ENCODE measurements at regions of chr1 and their contacts with region 1.

Region 1: GRCh38 chr1:99645699-99646531 is at the start of gene PALMD:
- DNase-seq: peak; percentile 61
- ATAC-seq: peak; percentile 89
- H3K4me3 ChIP-seq: peak within 1 kb of the TSS; percentile 74 to 86 (median 80)
- H3K27ac ChIP-seq: peak within 1 kb of the TSS; percentile 87
- H3K4me1 ChIP-seq: peaks cover 56% of the 10 kb centered on the region
- H3K27me3 ChIP-seq: no peaks in the 10 kb centered on the region; a peak in 1 of 5 replicates
- CTCF ChIP-seq: no peak
- EP300 ChIP-seq: no peak
- POLR2A ChIP-seq: peak; percentile 53 to 56; a peak in 2 of 4 replicates
- RAD21 ChIP-seq: no peak
- total RNA-seq, gene PALMD: 31.1 and 42.0 TPM in 2 replicates

Region 2: DNA sequence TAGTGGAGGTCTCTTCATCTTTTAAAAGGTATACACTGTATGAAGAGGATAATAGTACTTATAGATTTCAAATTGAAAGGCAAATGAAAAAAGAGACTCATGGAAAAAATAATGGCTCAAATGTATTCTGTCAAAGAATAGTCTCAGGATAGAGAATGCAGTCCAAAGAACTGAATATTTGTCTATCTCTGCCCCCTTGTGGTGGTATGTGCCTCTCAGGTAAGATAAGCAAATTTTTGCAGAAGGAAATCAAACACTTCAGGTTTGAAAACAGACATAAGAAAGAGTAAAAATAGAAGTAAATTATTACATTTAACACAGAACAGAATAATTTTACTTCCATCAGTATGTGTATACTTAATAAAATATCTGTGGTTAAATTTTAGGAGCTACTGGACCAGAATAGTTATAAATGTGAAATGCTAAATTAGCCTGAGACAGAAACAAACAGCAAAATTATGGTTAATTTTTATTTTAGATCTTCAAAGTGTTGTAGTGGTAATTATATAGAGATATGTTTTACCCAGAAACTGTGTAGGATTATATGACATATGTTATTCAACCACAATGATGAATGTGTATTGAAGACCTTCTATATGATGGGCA is 164.4 kb before region 1 on chr1:
- CTCF ChIA-PET with region 1: interaction called, 4 read pairs
- POLR2A ChIA-PET with region 1: no interaction called
- in situ Hi-C with region 1: no loop called
- intact Hi-C with region 1: loop called (anchors 2 kb)
- DNase-seq: peak; percentile 60
- ATAC-seq: peak; percentile 77
- H3K4me3 ChIP-seq: no peak overlapping the region
- H3K27ac ChIP-seq: no peak overlapping the region
- H3K4me1 ChIP-seq: no peaks in the 10 kb centered on the region
- H3K27me3 ChIP-seq: no peaks in the 10 kb centered on the region
- CTCF ChIP-seq: peak; percentile 70
- EP300 ChIP-seq: no peak
- POLR2A ChIP-seq: no peak
- RAD21 ChIP-seq: peak; percentile 53; the same call in 1 of the 2 replicates

Region 3: DNA sequence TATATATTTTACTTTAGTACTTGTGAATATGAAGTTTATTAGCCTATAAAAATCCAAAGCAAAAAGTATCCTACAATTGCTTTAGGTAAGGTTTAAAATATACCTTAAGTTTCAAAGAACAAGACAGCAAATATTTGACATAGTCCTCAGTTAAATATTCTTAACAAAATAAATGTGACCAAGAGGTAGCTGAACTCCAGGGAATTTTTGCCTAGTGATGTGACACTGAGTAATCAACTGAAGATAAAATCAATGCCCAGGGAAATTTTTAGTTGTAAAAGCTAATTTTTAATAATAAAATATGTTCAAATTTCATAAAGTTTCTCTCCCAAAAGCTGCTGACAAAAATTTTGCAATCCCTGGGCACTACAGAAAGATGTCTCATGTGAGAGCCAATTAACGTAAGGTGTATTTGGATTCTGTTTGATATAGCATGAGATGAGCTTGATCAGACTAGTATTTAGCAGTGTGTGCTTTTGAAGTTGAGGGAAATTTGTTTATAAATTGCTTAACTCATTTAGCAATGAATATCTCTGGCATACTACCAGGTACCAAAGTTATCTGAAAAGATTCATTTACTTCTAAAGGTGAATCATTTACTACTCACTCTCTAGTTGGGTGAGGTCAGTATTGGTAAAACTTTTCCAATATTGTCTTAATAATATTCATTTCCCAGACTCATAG is 80.2 kb before region 1 on chr1:
- CTCF ChIA-PET with region 1: no interaction called
- POLR2A ChIA-PET with region 1: interaction called, 20 read pairs
- in situ Hi-C with region 1: no loop called
- intact Hi-C with region 1: loop called (anchors 1 kb)
- DNase-seq: peak; percentile 60
- ATAC-seq: peak; percentile 60
- H3K4me3 ChIP-seq: peak overlapping the region in 2 of 3 experiments; percentile 38 to 51; a peak in 3 of 6 replicates
- H3K27ac ChIP-seq: peak overlapping the region; percentile 96
- H3K4me1 ChIP-seq: peaks cover 65% of the 10 kb centered on the region
- H3K27me3 ChIP-seq: no peaks in the 10 kb centered on the region
- CTCF ChIP-seq: no peak
- EP300 ChIP-seq: peak in 1 of 2 experiments; percentile 71; a peak in 2 of 4 replicates
- POLR2A ChIP-seq: no peak
- RAD21 ChIP-seq: no peak

Region 4: DNA sequence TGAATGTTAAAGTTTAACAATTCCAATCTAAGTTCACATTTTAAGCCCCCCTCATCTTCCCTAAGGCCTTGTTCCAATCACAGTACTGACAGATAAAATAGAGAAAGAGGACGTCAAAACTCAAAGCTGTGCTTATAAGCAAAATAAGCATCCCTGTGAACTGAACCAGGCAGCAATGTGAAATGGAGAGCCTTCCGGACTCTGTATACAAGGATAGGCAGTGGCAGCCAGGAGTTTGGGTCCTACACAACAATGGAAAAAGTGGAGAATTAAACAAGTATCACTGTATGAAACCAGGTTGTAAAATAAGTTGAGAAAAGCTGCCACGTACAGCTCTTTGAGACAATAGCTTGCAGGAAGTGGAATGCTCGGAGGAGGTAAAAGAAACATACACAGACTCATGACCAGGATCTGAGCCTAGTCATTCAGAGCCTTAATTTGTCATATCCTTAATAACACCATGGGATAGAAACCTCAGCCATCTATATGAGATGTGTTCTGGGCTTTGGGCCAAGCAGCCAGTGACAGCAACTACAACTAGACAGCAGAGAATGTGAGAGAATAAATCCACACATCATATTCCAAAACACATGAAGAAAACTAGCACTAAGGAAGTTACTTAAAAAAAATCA is 55.2 kb before region 1 on chr1:
- CTCF ChIA-PET with region 1: no interaction called
- POLR2A ChIA-PET with region 1: interaction called, 32 read pairs
- in situ Hi-C with region 1: no loop called
- intact Hi-C with region 1: loop called (anchors 1 kb)
- DNase-seq: no peak
- ATAC-seq: no peak
- H3K4me3 ChIP-seq: no peak overlapping the region
- H3K27ac ChIP-seq: peak overlapping the region; percentile 82
- H3K4me1 ChIP-seq: peaks cover 51% of the 10 kb centered on the region
- H3K27me3 ChIP-seq: no peaks in the 10 kb centered on the region
- CTCF ChIP-seq: no peak
- EP300 ChIP-seq: no peak
- POLR2A ChIP-seq: no peak
- RAD21 ChIP-seq: no peak

Region 5: DNA sequence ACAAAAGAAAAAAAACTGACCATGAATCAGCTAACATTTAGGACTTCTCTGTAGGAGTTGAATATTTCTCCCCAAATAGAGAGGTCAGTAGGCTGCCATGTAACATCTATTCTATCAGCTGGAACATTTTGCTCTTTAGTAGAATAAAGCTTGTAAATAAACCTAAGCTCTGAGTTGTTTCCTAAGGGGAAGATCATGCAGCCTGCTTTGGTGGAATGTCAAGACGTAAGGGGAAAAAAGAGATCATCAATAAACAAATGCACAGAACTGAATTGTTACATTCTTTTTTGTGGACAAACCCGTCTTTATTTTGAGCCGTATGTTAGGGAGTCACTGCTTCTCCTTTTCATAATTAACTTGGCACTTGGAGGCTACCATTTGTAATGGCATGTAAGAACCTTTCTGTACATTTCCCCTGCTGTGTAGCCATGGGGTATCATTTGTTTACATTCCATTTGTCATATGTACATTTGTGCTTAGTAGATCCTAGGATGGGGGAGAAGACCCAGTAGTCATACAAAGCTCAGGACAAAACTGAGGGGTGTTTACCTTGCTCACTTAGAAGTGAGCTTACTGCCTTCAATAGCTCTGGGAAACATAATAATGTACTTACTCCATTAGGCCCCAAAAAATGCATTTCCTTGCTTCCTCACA is 10.8 kb before region 1 on chr1:
- CTCF ChIA-PET with region 1: no interaction called
- POLR2A ChIA-PET with region 1: interaction called, 18 read pairs
- in situ Hi-C with region 1: no loop called
- intact Hi-C with region 1: no loop called
- DNase-seq: peak; percentile 81
- ATAC-seq: peak; percentile 87
- H3K4me3 ChIP-seq: no peak overlapping the region; a peak in 1 of 6 replicates
- H3K27ac ChIP-seq: no peak overlapping the region
- H3K4me1 ChIP-seq: peaks cover 34% of the 10 kb centered on the region
- H3K27me3 ChIP-seq: no peaks in the 10 kb centered on the region
- CTCF ChIP-seq: no peak
- EP300 ChIP-seq: peak in 1 of 2 experiments; percentile 45; a peak in 1 of 4 replicates
- POLR2A ChIP-seq: no peak
- RAD21 ChIP-seq: no peak

Region 6: GRCh38 chr1:99659755-99660210 is 13.9 kb after region 1 on chr1:
- CTCF ChIA-PET with region 1: no interaction called
- POLR2A ChIA-PET with region 1: no interaction called
- in situ Hi-C with region 1: no loop called
- intact Hi-C with region 1: no loop called
- DNase-seq: no peak
- ATAC-seq: no peak
- H3K4me3 ChIP-seq: no peak overlapping the region
- H3K27ac ChIP-seq: peak overlapping the region; percentile 8
- H3K4me1 ChIP-seq: peaks cover 16% of the 10 kb centered on the region
- H3K27me3 ChIP-seq: no peaks in the 10 kb centered on the region
- CTCF ChIP-seq: no peak
- EP300 ChIP-seq: no peak
- POLR2A ChIP-seq: no peak
- RAD21 ChIP-seq: no peak

Region 7: GRCh38 chr1:99766378-99766800 is 120.5 kb after region 1 on chr1 and contains the start of gene FRRS1:
- CTCF ChIA-PET with region 1: no interaction called
- POLR2A ChIA-PET with region 1: no interaction called
- in situ Hi-C with region 1: no loop called
- intact Hi-C with region 1: no loop called
- DNase-seq: peak; percentile 66
- ATAC-seq: peak; percentile 90
- H3K4me3 ChIP-seq: peak within 1 kb of the TSS; percentile 70 to 79 (median 78)
- H3K27ac ChIP-seq: peak within 1 kb of the TSS; percentile 83
- H3K4me1 ChIP-seq: peaks cover 53% of the 10 kb centered on the region
- H3K27me3 ChIP-seq: no peaks in the 10 kb centered on the region
- CTCF ChIP-seq: peak; percentile 36
- EP300 ChIP-seq: no peak
- POLR2A ChIP-seq: peak; percentile 49 to 51; a peak in 2 of 4 replicates
- RAD21 ChIP-seq: no peak
- total RNA-seq, gene FRRS1: 12.0 and 23.4 TPM in 2 replicates